Caco-2 (cell line): ENCODE measurements at regions of chr2 and their contacts with region 1.

Region 1: DNA sequence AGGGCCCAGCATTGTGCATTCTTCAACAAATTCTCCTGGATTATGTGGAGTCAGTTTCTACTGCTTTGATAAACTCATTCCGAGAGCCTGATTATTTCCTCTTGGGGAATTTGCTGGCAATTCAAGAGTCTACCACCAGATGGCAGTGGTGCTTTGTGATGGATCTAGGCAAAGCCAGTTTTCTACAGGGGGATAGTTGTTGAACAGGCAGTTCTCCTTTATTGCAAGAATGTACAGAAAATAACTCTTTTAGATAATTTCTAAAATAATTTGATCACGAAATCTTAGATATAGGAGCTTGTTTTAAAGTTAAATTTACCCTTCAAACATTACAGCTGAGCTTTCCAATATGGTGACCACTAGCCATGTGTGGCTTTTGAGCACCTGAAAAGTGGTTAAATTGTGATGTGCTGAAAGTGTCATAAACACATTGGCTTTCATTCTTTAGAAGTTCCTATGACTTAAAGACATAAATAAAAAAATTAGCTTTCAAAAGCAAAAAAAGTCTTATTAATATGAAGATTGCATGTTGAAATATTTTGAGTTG is 66.7 kb upstream of the HAAO start:
- DNase-seq: peak; percentile 75 to 85
- H3K4me3 ChIP-seq: no peak overlapping the region
- H3K4me3 Mint-ChIP-seq: no peak overlapping the region
- H3K27ac Mint-ChIP-seq: no peak overlapping the region
- H3K4me1 ChIP-seq: peaks cover 12% of the 10 kb centered on the region; the same call in 1 of the 2 replicates
- H3K4me1 Mint-ChIP-seq: peaks cover 14% of the 10 kb centered on the region
- H3K27me3 ChIP-seq: no peaks in the 10 kb centered on the region
- H3K27me3 Mint-ChIP-seq: no peaks in the 10 kb centered on the region
- CTCF ChIP-seq: peak; percentile 89 to 94

Region 2: GRCh38 chr2:42474765-42475454 is 384.2 kb before region 1 on chr2:
- CTCF ChIA-PET with region 1: no interaction called
- POLR2A ChIA-PET with region 1: no interaction called
- intact Hi-C with region 1: no loop called
- DNase-seq: no peak
- H3K4me3 ChIP-seq: no peak overlapping the region
- H3K4me3 Mint-ChIP-seq: no peak overlapping the region
- H3K27ac Mint-ChIP-seq: no peak overlapping the region
- H3K4me1 ChIP-seq: no peaks in the 10 kb centered on the region
- H3K4me1 Mint-ChIP-seq: peaks cover 4% of the 10 kb centered on the region
- H3K27me3 ChIP-seq: no peaks in the 10 kb centered on the region
- H3K27me3 Mint-ChIP-seq: no peaks in the 10 kb centered on the region
- CTCF ChIP-seq: no peak

Region 3: GRCh38 chr2:42792583-42793333 is 66.3 kb before region 1 on chr2 and contains the start of gene HAAO:
- CTCF ChIA-PET with region 1: no interaction called
- POLR2A ChIA-PET with region 1: no interaction called
- intact Hi-C with region 1: no loop called
- DNase-seq: peak; percentile 91 to 95
- H3K4me3 ChIP-seq: peak within 1 kb of the TSS; percentile 87
- H3K4me3 Mint-ChIP-seq: peak within 1 kb of the TSS; percentile 79
- H3K27ac Mint-ChIP-seq: peak within 1 kb of the TSS; percentile 82
- H3K4me1 ChIP-seq: peaks cover 12% of the 10 kb centered on the region
- H3K4me1 Mint-ChIP-seq: peaks cover 46% of the 10 kb centered on the region
- H3K27me3 ChIP-seq: no peaks in the 10 kb centered on the region
- H3K27me3 Mint-ChIP-seq: no peaks in the 10 kb centered on the region
- CTCF ChIP-seq: no peak
- total RNA-seq, gene HAAO: 44.1 and 47.5 TPM in 2 replicates

Region 4: GRCh38 chr2:42893047-42893758 is 34.1 kb after region 1 on chr2:
- CTCF ChIA-PET with region 1: no interaction called
- POLR2A ChIA-PET with region 1: no interaction called
- intact Hi-C with region 1: no loop called
- DNase-seq: no peak
- H3K4me3 ChIP-seq: no peak overlapping the region
- H3K4me3 Mint-ChIP-seq: no peak overlapping the region
- H3K27ac Mint-ChIP-seq: peak overlapping the region; percentile 22
- H3K4me1 ChIP-seq: peaks cover 7% of the 10 kb centered on the region; the same call in 1 of the 2 replicates
- H3K4me1 Mint-ChIP-seq: peaks cover 5% of the 10 kb centered on the region
- H3K27me3 ChIP-seq: no peaks in the 10 kb centered on the region
- H3K27me3 Mint-ChIP-seq: no peaks in the 10 kb centered on the region
- CTCF ChIP-seq: no peak

Region 5: GRCh38 chr2:42928692-42929545 is 69.8 kb after region 1 on chr2:
- CTCF ChIA-PET with region 1: interaction called, 7 read pairs
- POLR2A ChIA-PET with region 1: no interaction called
- intact Hi-C with region 1: loop called (anchors 1 kb)
- DNase-seq: peak; percentile 65 to 70
- H3K4me3 ChIP-seq: no peak overlapping the region
- H3K4me3 Mint-ChIP-seq: no peak overlapping the region
- H3K27ac Mint-ChIP-seq: peak overlapping the region; percentile 76
- H3K4me1 ChIP-seq: peaks cover 66% of the 10 kb centered on the region
- H3K4me1 Mint-ChIP-seq: peaks cover 53% of the 10 kb centered on the region
- H3K27me3 ChIP-seq: no peaks in the 10 kb centered on the region
- H3K27me3 Mint-ChIP-seq: no peaks in the 10 kb centered on the region
- CTCF ChIP-seq: peak; percentile 38 to 50

Region 6: DNA sequence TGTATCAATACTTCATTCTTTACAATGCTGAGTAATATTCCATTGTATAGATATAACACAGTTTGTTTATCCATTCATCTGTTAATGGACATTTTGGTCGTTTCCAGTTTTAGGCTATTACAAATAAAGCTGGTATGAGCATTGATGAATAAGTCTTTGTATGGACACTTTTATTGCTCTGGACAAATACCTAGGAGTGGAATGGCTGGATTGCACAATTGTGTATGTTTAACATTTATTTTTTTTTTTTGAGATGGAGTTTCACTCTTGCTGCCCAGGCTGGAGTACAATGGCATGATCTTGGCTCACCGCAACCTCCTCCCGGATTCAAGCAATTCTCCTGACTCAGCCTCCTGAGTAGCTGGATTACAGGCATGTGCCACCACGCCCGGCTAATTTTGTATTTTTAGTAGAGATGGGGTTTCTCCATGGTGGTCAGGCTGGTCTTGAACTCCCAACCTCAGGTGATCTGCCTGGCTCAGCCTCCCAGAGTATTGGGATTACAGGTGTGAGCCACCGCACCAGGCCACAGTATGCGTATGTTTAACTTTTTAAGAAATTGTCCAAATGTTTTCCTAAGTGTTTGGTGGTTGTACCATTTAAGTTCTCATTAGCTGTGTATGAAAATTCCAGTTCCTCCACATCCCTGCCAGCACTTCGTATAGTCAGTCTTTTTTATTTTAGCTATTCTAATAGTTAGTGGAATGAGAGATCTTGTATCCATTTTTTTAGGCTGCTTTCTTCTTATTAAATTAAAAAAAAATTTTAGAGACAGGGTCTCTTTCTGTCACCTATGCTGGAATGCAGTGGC is 128.2 kb after region 1 on chr2:
- CTCF ChIA-PET with region 1: no interaction called
- POLR2A ChIA-PET with region 1: no interaction called
- intact Hi-C with region 1: no loop called
- DNase-seq: peak; percentile 50 to 54
- H3K4me3 ChIP-seq: no peak overlapping the region
- H3K4me3 Mint-ChIP-seq: no peak overlapping the region
- H3K27ac Mint-ChIP-seq: peak overlapping the region; percentile 21
- H3K4me1 ChIP-seq: peaks cover 34% of the 10 kb centered on the region
- H3K4me1 Mint-ChIP-seq: peaks cover 30% of the 10 kb centered on the region
- H3K27me3 ChIP-seq: no peaks in the 10 kb centered on the region
- H3K27me3 Mint-ChIP-seq: no peaks in the 10 kb centered on the region
- CTCF ChIP-seq: no peak

Region 7: GRCh38 chr2:43131024-43131889 is 272.2 kb after region 1 on chr2:
- CTCF ChIA-PET with region 1: no interaction called
- POLR2A ChIA-PET with region 1: no interaction called
- intact Hi-C with region 1: loop called (anchors 10 kb)
- DNase-seq: peak; percentile 59 to 65
- H3K4me3 ChIP-seq: no peak overlapping the region
- H3K4me3 Mint-ChIP-seq: no peak overlapping the region
- H3K27ac Mint-ChIP-seq: peak overlapping the region; percentile 51
- H3K4me1 ChIP-seq: peaks cover 50% of the 10 kb centered on the region
- H3K4me1 Mint-ChIP-seq: peaks cover 53% of the 10 kb centered on the region
- H3K27me3 ChIP-seq: no peaks in the 10 kb centered on the region
- H3K27me3 Mint-ChIP-seq: no peaks in the 10 kb centered on the region
- CTCF ChIP-seq: peak in 1 of 2 experiments; percentile 33

Region 8: DNA sequence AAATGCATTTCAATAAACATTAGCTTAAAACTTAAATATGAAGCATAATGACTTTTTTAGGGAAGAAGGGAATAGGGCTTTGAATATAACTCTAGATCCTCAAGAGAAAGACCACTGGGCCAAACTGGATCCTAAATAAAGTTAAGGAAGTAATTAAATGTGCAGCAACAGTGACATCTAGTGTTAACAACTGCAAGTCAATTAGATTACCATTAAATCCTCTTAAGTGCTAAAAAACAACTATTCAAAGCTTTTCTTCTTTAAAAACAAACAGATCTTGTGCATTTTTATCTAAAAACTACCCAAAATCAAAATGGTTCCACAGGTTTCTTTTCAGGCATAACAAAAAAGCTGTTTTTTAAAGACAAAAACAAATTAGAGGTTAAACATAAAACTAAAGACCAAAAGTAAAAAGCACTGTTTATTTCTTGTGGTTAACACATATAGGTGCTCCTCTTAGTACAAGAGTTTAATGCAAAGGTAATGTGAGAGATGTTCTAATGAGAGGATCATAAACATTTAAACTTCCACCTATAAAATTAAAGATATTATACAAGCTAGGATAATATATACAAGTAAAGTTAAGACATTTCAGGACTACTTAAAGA is 625.3 kb after region 1 on chr2:
- CTCF ChIA-PET with region 1: no interaction called
- POLR2A ChIA-PET with region 1: no interaction called
- intact Hi-C with region 1: loop called (anchors 1 kb)
- DNase-seq: peak in 1 of 2 experiments; percentile 57
- H3K4me3 ChIP-seq: no peak overlapping the region
- H3K4me3 Mint-ChIP-seq: no peak overlapping the region
- H3K27ac Mint-ChIP-seq: no peak overlapping the region
- H3K4me1 ChIP-seq: peaks cover 14% of the 10 kb centered on the region
- H3K4me1 Mint-ChIP-seq: peaks cover 34% of the 10 kb centered on the region
- H3K27me3 ChIP-seq: no peaks in the 10 kb centered on the region
- H3K27me3 Mint-ChIP-seq: no peaks in the 10 kb centered on the region
- CTCF ChIP-seq: peak; percentile 28 to 80

Region 9: GRCh38 chr2:43576981-43577892 is 718.2 kb after region 1 on chr2:
- CTCF ChIA-PET with region 1: interaction called, 3 read pairs
- POLR2A ChIA-PET with region 1: no interaction called
- intact Hi-C with region 1: loop called (anchors 1 kb)
- DNase-seq: peak in 1 of 2 experiments; percentile 35
- H3K4me3 ChIP-seq: no peak overlapping the region
- H3K4me3 Mint-ChIP-seq: no peak overlapping the region
- H3K27ac Mint-ChIP-seq: no peak overlapping the region
- H3K4me1 ChIP-seq: no peaks in the 10 kb centered on the region
- H3K4me1 Mint-ChIP-seq: no peaks in the 10 kb centered on the region
- H3K27me3 ChIP-seq: no peaks in the 10 kb centered on the region
- H3K27me3 Mint-ChIP-seq: no peaks in the 10 kb centered on the region
- CTCF ChIP-seq: peak; percentile 78 to 82